Stomach (tissue), 19 donors: ENCODE measurements at regions of chr2 and their contacts with region 1.

Region 1: DNA sequence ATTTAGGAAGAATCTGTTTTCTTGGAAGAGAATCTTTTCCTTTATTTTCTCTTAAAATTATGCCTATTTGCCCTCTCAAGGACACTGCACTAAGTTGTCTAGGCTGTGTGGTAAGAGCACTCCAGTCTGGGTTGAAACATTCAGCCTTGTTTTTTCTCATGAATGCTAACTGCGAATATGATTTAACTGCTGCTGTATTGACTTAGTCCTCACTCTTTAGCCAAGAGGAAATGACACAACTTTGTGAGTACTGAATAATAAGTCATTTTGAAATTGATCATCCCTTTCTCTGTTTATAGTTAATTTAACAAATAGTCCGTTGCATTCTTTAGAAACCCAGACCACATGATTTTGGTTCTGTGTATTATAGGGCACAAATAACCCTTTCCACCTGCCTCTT is 4.5 kb upstream of the RND3 start:
- DNase-seq: no peak
- H3K4me3 ChIP-seq: no peak overlapping the region
- H3K27ac ChIP-seq: no peak overlapping the region
- H3K4me1 ChIP-seq: no peaks in the 10 kb centered on the region
- H3K27me3 ChIP-seq: peaks cover 0 to 6% (median 0%) of the 10 kb centered on the region in 3 donors
- CTCF ChIP-seq: no peak
- EP300 ChIP-seq: no peak
- POLR2A ChIP-seq: no peak

Region 2: DNA sequence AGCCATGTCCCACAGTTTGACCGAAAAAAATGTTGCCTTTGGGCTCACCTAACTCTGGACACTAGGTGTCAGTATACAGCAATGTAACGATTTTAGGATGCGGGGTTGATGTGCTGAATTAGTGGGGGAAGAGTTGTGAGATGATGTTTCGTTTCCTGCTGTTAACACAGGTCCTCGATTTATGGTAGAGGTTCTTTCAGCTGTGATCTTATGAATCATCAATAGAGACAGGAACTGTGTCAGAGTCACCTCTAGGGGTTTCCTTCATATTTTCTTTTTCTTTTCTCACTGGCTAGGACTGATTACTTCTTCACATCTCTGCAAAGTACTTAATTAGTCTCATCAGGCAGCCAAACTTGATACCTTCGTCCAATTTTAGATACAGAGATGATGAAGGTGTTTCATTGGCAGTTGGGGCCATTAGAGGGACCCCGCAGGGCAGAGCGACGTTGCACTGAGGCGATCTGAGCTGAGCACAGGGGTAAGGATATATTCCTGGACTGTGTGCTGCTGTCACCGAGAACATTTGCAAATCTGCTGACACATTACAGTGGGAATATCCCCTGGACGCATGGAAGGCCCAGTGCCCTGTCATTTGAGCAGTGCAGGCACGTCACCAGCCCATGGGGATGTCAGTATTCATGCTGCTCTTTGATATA is 894.1 kb before region 1 on chr2:
- intact Hi-C with region 1: loop called (anchors 5 kb)
- DNase-seq: peak; percentile 30 to 88
- H3K4me3 ChIP-seq: peak overlapping the region in 2 of 4 donors; percentile 11 to 19
- H3K27ac ChIP-seq: no peak overlapping the region
- H3K4me1 ChIP-seq: peaks cover 0 to 9% (median 5%) of the 10 kb centered on the region in 4 donors
- H3K27me3 ChIP-seq: no peaks in the 10 kb centered on the region
- CTCF ChIP-seq: peak in 5 of 7 experiments; percentile 63 to 87 (median 74)
- EP300 ChIP-seq: no peak
- POLR2A ChIP-seq: no peak